CD4-positive, alpha-beta T cell (primary cell): ENCODE measurements at regions of chr19 and their contacts with region 1.

Region 1: GRCh38 chr19:19591133-19591825 is 27.2 kb downstream of the PBX4 start:
- DNase-seq: peak in 13 of 14 experiments; percentile 27 to 92 (median 49)
- ATAC-seq: peak; percentile 91
- H3K4me3 ChIP-seq: no peak overlapping the region
- H3K4me3 Mint-ChIP-seq: peak overlapping the region; percentile 60
- H3K27ac ChIP-seq: peak overlapping the region; percentile 55 to 79
- H3K27ac Mint-ChIP-seq: peak overlapping the region; percentile 92
- H3K4me1 ChIP-seq: peaks cover 78% of the 10 kb centered on the region
- H3K4me1 Mint-ChIP-seq: peaks cover 47% of the 10 kb centered on the region
- H3K27me3 ChIP-seq: no peaks in the 10 kb centered on the region
- H3K27me3 Mint-ChIP-seq: no peaks in the 10 kb centered on the region
- CTCF ChIP-seq: no peak

Region 2: DNA sequence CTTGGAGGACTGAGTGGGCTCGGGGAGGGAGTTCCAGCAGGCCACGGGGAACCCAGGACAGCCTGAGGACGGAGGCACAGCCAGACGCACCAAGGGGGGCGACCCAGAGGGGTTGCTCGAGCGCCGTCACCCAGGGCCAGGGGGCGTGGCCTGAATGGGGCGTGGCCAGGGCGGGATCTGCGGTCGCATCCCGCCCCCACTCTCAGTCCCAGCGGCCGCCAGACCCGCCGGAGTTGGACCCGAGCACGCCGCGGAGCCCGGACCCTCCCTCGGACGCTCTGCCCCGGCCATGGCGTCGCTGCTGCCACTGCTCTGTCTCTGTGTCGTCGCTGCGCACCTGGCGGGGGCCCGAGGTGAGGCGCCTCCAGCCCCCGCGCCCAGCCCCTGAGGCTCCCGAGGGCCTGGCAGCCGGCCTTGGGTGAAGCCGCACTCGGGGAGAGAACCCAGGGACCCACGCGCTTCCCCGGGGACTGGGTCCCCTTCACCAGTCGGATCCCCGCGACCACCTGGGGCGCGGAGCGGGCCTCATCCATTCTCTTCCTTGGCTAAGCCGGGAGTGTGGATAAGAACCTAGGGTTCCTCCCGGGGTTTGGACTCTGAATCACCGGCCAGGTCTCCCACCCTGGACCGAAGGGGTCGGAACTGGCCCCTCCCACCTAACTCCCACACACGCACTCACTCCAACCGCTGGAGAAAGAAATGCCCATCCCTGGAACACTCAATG is 53.1 kb before region 1 on chr19 and contains the start of gene CILP2:
- CTCF ChIA-PET with region 1: interaction called, 12 read pairs
- POLR2A ChIA-PET with region 1: interaction called, 3 read pairs
- intact Hi-C with region 1: loop called in 1 of 2 experiments (anchors 5 kb)
- DNase-seq: peak in 8 of 14 experiments; percentile 36 to 68 (median 42)
- ATAC-seq: peak; percentile 5
- H3K4me3 ChIP-seq: peak within 1 kb of the TSS; percentile 25
- H3K4me3 Mint-ChIP-seq: peak within 1 kb of the TSS; percentile 71
- H3K27ac ChIP-seq: no peak within 1 kb of the TSS
- H3K27ac Mint-ChIP-seq: peak within 1 kb of the TSS; percentile 51
- H3K4me1 ChIP-seq: peaks cover 47% of the 10 kb centered on the region
- H3K4me1 Mint-ChIP-seq: peaks cover 41% of the 10 kb centered on the region
- H3K27me3 ChIP-seq: no peaks in the 10 kb centered on the region
- H3K27me3 Mint-ChIP-seq: no peaks in the 10 kb centered on the region
- CTCF ChIP-seq: no peak
- total RNA-seq, gene CILP2: 1.1 to 1.7 TPM

Region 3: GRCh38 chr19:19578252-19578651 is 13.0 kb before region 1 on chr19:
- CTCF ChIA-PET with region 1: no interaction called
- POLR2A ChIA-PET with region 1: no interaction called
- intact Hi-C with region 1: no loop called
- DNase-seq: no peak
- ATAC-seq: no peak
- H3K4me3 ChIP-seq: no peak overlapping the region
- H3K4me3 Mint-ChIP-seq: no peak overlapping the region
- H3K27ac ChIP-seq: no peak overlapping the region
- H3K27ac Mint-ChIP-seq: no peak overlapping the region
- H3K4me1 ChIP-seq: peaks cover 22% of the 10 kb centered on the region
- H3K4me1 Mint-ChIP-seq: peaks cover 6% of the 10 kb centered on the region
- H3K27me3 ChIP-seq: no peaks in the 10 kb centered on the region
- H3K27me3 Mint-ChIP-seq: no peaks in the 10 kb centered on the region
- CTCF ChIP-seq: no peak